ENCODE measurements at regions of chr9 and their contacts with region 1.

Region 1: GRCh38 chr9:76269818-76270217 is 124.4 kb downstream of the RFK start:
- DNase-seq: no peak
- ATAC-seq: no peak
- H3K4me3 ChIP-seq: no peak overlapping the region
- H3K27ac ChIP-seq: no peak overlapping the region
- H3K4me1 ChIP-seq: peaks cover 0 to 5% (median 0%) of the 10 kb centered on the region in 12 donors
- H3K27me3 ChIP-seq: no peaks in the 10 kb centered on the region
- CTCF ChIP-seq: no peak
- POLR2A ChIP-seq: no peak

Region 2: GRCh38 chr9:76231001-76231400 is 38.8 kb before region 1 on chr9:
- intact Hi-C with region 1: loop called in 1 of 10 experiments (anchors 5 kb)
- DNase-seq: no peak
- ATAC-seq: no peak
- H3K4me3 ChIP-seq: no peak overlapping the region
- H3K27ac ChIP-seq: no peak overlapping the region
- H3K4me1 ChIP-seq: peaks cover 0 to 4% (median 0%) of the 10 kb centered on the region in 12 donors
- H3K27me3 ChIP-seq: peaks cover 0 to 5% (median 0%) of the 10 kb centered on the region in 9 donors
- CTCF ChIP-seq: no peak
- POLR2A ChIP-seq: no peak

Region 3: GRCh38 chr9:76475686-76476085 is 205.9 kb after region 1 on chr9:
- intact Hi-C with region 1: no loop called
- DNase-seq: no peak
- ATAC-seq: peak in 1 of 4 donors; percentile 31
- H3K4me3 ChIP-seq: no peak overlapping the region
- H3K27ac ChIP-seq: peak overlapping the region in 1 of 12 donors; percentile 65
- H3K4me1 ChIP-seq: peaks cover 0 to 45% (median 0%) of the 10 kb centered on the region in 12 donors
- H3K27me3 ChIP-seq: no peaks in the 10 kb centered on the region
- CTCF ChIP-seq: no peak
- POLR2A ChIP-seq: no peak

Region 4: GRCh38 chr9:76784881-76785280 is 515.1 kb after region 1 on chr9:
- intact Hi-C with region 1: no loop called
- DNase-seq: no peak
- ATAC-seq: no peak
- H3K4me3 ChIP-seq: no peak overlapping the region
- H3K27ac ChIP-seq: no peak overlapping the region
- H3K4me1 ChIP-seq: no peaks in the 10 kb centered on the region
- H3K27me3 ChIP-seq: no peaks in the 10 kb centered on the region
- CTCF ChIP-seq: no peak
- POLR2A ChIP-seq: no peak

Measured in heart left ventricle (tissue), 16 donors.